HepG2 (cell line): ENCODE measurements at regions of chr11 and their contacts with region 1.

Region 1: GRCh38 chr11:45457649-45458048 is 171.5 kb upstream of the SYT13 start:
- DNase-seq: no peak
- ATAC-seq: no peak
- H3K4me3 ChIP-seq: no peak overlapping the region
- H3K27ac ChIP-seq: no peak overlapping the region
- H3K4me1 ChIP-seq: peaks cover 10% of the 10 kb centered on the region; the same call in 1 of the 2 replicates
- H3K27me3 ChIP-seq: peaks cover 1 to 8% of the 10 kb centered on the region in 2 experiments; a peak in 3 of 5 replicates
- CTCF ChIP-seq: no peak
- EP300 ChIP-seq: no peak
- POLR2A ChIP-seq: no peak
- RAD21 ChIP-seq: no peak

Region 2: DNA sequence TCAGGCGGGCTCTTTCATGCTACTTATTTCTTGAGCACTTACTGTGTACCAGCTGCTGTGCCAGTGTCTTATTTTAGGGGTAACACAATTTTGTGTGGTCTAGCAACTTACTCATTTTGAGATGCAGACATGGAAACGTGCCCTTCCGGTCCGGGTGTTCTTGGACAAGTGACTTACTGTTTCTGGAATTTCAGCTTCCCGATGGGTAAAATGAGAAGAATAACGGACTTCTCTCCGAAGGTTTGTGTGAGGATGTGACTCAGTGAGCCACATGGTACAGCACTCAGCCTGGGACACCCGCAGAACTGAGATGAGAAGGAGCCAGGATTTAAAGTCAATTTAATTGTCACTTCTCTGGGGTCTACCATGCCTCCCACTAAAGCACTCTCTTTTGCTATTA is 57.1 kb before region 1 on chr11:
- CTCF ChIA-PET with region 1: no interaction called
- POLR2A ChIA-PET with region 1: no interaction called
- in situ Hi-C with region 1: no loop called
- intact Hi-C with region 1: no loop called
- DNase-seq: no peak
- ATAC-seq: no peak
- H3K4me3 ChIP-seq: no peak overlapping the region
- H3K27ac ChIP-seq: no peak overlapping the region
- H3K4me1 ChIP-seq: peaks cover 29% of the 10 kb centered on the region
- H3K27me3 ChIP-seq: peaks cover 0 to 7% of the 10 kb centered on the region in 2 experiments; a peak in 1 of 5 replicates
- CTCF ChIP-seq: no peak
- EP300 ChIP-seq: no peak
- POLR2A ChIP-seq: no peak
- RAD21 ChIP-seq: no peak

Region 3: DNA sequence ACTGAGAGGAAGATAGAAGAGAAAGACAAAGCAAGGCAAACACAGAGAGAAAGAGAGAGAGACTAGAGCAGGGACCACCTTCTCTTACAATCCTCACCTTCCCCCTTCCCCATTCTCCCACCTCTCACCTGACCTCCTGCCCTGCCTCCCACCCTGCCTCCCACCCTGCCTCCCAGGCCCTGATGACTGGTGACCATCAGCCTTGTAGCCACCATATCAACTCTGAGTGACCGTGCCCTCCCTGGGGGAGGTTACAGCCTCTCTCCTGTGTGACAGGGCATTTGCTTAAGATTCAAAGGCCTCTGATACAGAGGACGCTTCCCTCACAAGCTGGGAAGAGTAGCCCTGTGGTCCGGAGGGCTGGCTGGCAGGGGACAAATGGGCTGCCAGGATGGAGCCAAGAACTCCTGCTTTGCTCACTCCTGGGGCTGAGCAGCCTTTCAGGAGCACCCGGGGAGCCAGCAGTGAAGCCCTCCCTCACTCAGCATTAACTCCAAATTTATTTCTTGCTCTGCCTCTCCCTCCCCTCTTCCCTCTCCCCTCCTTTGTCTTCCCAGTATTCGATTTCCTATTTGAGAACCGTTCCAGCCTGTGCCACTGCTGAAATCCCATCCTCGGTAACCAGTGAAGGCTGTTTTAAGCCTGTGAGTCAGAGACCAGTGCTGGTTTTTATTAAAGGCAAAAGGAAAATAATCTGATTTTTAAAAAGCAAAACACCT is 46.3 kb before region 1 on chr11:
- CTCF ChIA-PET with region 1: no interaction called
- POLR2A ChIA-PET with region 1: no interaction called
- in situ Hi-C with region 1: no loop called
- intact Hi-C with region 1: no loop called
- DNase-seq: no peak
- ATAC-seq: no peak
- H3K4me3 ChIP-seq: no peak overlapping the region
- H3K27ac ChIP-seq: no peak overlapping the region
- H3K4me1 ChIP-seq: no peaks in the 10 kb centered on the region
- H3K27me3 ChIP-seq: peaks cover 0 to 24% of the 10 kb centered on the region in 2 experiments; a peak in 3 of 5 replicates
- CTCF ChIP-seq: no peak
- EP300 ChIP-seq: no peak
- POLR2A ChIP-seq: no peak
- RAD21 ChIP-seq: no peak

Region 4: DNA sequence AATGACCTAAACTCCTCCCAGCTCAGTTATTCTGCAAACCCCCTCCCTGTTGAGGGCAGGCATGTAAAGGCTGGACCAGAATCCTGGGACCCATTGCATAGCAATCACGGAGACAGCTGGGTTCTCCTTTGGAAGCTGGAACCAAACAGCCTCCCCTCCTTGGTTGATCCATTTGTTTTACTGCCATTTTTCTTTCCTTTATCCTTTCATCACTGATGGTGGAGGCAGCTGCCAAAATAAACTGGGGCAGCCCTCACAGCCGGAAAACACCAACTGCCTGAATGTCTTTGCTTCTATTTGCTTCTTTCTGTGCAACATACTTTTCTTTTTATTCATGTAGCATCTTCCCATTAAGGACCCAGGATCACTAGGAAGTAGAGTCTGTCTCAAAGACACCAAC is 21.5 kb before region 1 on chr11:
- CTCF ChIA-PET with region 1: no interaction called
- POLR2A ChIA-PET with region 1: no interaction called
- in situ Hi-C with region 1: no loop called
- intact Hi-C with region 1: no loop called
- DNase-seq: no peak
- ATAC-seq: no peak
- H3K4me3 ChIP-seq: no peak overlapping the region
- H3K27ac ChIP-seq: no peak overlapping the region
- H3K4me1 ChIP-seq: no peaks in the 10 kb centered on the region
- H3K27me3 ChIP-seq: peaks cover 1 to 18% of the 10 kb centered on the region in 2 experiments; a peak in 4 of 5 replicates
- CTCF ChIP-seq: no peak
- EP300 ChIP-seq: no peak
- POLR2A ChIP-seq: no peak
- RAD21 ChIP-seq: no peak

Region 5: GRCh38 chr11:45518141-45518832 is 60.6 kb after region 1 on chr11:
- CTCF ChIA-PET with region 1: no interaction called
- POLR2A ChIA-PET with region 1: no interaction called
- in situ Hi-C with region 1: loop called (anchors 10 kb)
- intact Hi-C with region 1: no loop called
- DNase-seq: no peak
- ATAC-seq: no peak
- H3K4me3 ChIP-seq: no peak overlapping the region
- H3K27ac ChIP-seq: no peak overlapping the region
- H3K4me1 ChIP-seq: no peaks in the 10 kb centered on the region
- H3K27me3 ChIP-seq: peaks cover 0 to 8% of the 10 kb centered on the region in 2 experiments; a peak in 1 of 5 replicates
- CTCF ChIP-seq: no peak
- EP300 ChIP-seq: no peak
- POLR2A ChIP-seq: no peak
- RAD21 ChIP-seq: no peak

Region 6: DNA sequence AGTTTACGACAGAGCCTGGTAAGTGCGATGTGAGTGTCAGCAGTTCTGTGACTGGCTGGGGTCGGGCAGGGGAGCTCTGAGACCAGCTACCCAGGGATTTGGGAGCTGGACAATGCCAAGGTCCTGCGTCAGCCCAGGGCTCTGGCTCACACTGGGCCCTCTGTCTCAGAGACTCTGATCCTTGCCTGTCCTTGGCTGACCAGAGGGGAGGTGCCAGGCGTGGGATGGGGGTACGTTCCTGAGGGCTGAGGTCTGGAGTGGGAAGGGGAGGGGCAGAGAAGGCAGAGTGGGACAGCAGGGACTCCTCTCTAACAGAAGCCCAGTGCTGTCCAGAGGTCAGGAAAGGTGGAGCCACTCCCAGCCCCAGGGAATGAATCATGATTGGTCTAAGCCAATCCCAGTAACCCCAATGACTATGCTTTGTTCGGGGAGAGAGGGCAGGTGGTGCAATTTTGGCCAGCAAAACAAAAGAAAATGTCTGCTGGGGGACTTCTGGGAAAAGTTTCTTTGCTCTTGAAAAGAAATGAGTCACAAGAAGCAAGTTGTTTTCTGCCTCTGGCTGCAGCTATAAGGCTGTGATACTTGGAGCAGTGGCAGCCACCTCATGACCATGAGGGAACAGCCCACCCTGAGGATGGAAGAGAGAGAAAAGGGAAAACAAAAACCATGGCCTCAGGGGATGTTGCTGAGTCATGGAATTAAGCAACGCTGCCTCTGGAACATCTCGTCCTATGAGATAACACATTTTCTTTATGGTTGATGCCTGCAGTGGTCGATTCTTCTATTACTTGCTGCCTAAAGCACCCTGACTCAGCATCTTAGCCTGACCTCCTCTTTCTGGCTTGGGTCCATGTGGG is 99.4 kb after region 1 on chr11:
- CTCF ChIA-PET with region 1: no interaction called
- POLR2A ChIA-PET with region 1: no interaction called
- in situ Hi-C with region 1: no loop called
- intact Hi-C with region 1: no loop called
- DNase-seq: no peak
- ATAC-seq: peak; percentile 29; the same call in 2 of the 3 replicates
- H3K4me3 ChIP-seq: no peak overlapping the region
- H3K27ac ChIP-seq: no peak overlapping the region
- H3K4me1 ChIP-seq: no peaks in the 10 kb centered on the region
- H3K27me3 ChIP-seq: peaks cover 5 to 9% of the 10 kb centered on the region in 2 experiments; a peak in 3 of 5 replicates
- CTCF ChIP-seq: no peak
- EP300 ChIP-seq: no peak
- POLR2A ChIP-seq: no peak
- RAD21 ChIP-seq: no peak